Calu3 (cell line): ENCODE measurements at regions of chr2 and their contacts with region 1.

Region 1: DNA sequence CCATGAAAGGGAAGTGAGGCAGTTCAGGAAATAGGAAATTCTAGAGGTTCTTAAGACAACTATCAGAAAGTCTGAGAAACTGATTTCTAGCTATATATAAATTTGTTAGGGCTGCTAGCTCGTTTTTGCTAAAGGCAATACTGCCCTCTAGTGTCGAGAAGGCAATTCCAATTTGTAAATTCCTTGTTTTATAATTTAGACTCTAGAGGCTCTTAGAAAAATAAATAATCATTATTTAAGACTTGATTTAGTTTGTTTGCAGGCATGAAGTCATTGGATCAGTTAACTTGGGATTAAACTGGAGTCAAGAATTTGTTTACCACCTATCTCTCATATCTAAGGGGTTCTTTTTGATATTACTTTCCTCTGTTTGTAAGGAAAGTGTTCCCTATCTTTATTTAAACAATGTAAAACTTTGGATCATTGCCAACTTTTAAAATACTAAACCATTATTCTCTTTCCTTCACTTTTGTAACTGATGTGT is 66.2 kb downstream of the ACVR2A start:
- DNase-seq: peak; percentile 43
- H3K4me3 Mint-ChIP-seq: no peak overlapping the region
- H3K27ac Mint-ChIP-seq: no peak overlapping the region
- H3K4me1 Mint-ChIP-seq: peaks cover 13% of the 10 kb centered on the region
- H3K27me3 Mint-ChIP-seq: no peaks in the 10 kb centered on the region
- CTCF ChIP-seq: no peak

Region 2: GRCh38 chr2:146927080-146927711 is 983.8 kb before region 1 on chr2:
- CTCF ChIA-PET with region 1: interaction called, 19 read pairs
- intact Hi-C with region 1: loop called (anchors 1 kb)
- DNase-seq: peak; percentile 76
- H3K4me3 Mint-ChIP-seq: no peak overlapping the region
- H3K27ac Mint-ChIP-seq: no peak overlapping the region
- H3K4me1 Mint-ChIP-seq: peaks cover 13% of the 10 kb centered on the region
- H3K27me3 Mint-ChIP-seq: no peaks in the 10 kb centered on the region
- CTCF ChIP-seq: peak; percentile 55

Region 3: GRCh38 chr2:147045113-147045512 is 865.9 kb before region 1 on chr2:
- CTCF ChIA-PET with region 1: interaction called, 10 read pairs
- intact Hi-C with region 1: loop called (anchors 1 kb)
- DNase-seq: peak; percentile 77
- H3K4me3 Mint-ChIP-seq: no peak overlapping the region
- H3K27ac Mint-ChIP-seq: peak overlapping the region; percentile 2
- H3K4me1 Mint-ChIP-seq: peaks cover 22% of the 10 kb centered on the region
- H3K27me3 Mint-ChIP-seq: no peaks in the 10 kb centered on the region
- CTCF ChIP-seq: peak; percentile 82

Region 4: DNA sequence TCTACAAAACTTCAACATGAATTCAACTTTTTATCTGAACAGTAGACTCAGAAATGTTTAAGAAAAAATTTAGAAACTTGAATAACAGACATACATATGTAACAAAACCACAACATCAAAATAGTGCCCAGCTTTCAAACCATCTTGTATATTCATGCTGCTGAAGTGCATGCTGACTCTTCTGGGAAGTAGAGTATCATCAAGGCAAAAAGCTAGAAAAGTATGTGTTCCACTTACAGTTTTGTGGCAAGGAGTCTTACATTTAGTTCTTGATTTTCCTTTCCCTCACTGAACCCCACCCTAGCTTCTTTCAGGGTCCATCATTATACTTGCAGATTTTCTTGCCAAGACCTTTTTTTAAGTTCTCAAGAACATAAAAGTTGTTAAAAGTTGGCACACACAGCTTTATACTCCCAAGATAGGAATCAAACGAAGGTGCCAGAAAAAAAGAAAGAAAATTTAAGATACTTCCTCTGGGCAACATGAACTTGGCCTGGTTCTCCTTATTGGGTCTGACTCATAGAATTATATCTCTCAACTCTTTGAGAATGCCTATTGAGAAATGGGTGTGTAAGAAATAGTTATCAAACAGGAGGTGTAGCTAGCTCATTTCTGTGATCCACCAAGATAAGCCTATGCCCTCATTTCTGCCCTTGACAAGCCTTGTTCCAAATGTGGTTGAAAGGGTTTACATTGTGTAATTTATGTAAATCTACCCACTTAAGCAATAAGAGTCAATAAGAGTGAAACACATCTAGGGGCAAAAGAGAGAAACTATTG is 733.8 kb before region 1 on chr2:
- CTCF ChIA-PET with region 1: no interaction called
- intact Hi-C with region 1: loop called (anchors 5 kb)
- DNase-seq: no peak
- H3K4me3 Mint-ChIP-seq: no peak overlapping the region
- H3K27ac Mint-ChIP-seq: peak overlapping the region; percentile 43
- H3K4me1 Mint-ChIP-seq: peaks cover 43% of the 10 kb centered on the region
- H3K27me3 Mint-ChIP-seq: no peaks in the 10 kb centered on the region
- CTCF ChIP-seq: no peak

Region 5: DNA sequence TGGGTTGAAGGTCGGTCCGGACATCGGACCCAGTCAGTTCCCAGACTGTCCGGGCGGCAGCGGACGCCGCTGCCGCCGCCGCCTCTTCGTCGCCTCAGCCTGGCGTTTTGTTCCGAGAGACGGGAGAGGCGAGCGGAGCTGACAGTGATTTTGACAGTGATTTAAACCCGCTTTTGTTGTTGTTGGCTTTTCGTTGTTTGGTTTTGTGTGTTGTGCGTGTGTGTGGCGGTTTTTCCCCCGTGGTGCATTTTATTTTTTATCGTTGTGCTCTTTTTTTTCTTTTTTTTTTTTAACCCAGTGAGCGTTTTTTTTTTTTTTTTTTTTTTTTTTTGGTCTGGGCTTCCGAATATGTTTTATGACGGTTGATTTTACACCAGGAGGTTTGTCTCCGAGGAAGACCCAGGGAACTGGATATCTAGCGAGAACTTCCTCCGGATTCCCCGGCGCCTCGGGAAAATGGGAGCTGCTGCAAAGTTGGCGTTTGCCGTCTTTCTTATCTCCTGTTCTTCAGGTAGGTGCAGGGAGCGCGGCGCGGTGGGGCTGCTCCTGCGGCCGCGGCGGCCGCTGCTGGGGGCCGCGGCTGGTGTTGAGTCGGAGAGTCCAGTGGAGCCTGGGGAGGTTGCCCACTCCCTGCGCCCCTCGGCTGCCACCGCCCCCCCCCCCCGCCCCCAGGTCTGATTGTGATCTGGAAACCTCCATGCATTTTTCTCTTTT is 66.2 kb before region 1 on chr2 and contains the start of gene ACVR2A:
- CTCF ChIA-PET with region 1: no interaction called
- intact Hi-C with region 1: loop called (anchors 5 kb)
- DNase-seq: peak; percentile 27
- H3K4me3 Mint-ChIP-seq: peak within 1 kb of the TSS; percentile 83
- H3K27ac Mint-ChIP-seq: peak within 1 kb of the TSS; percentile 60
- H3K4me1 Mint-ChIP-seq: peaks cover 37% of the 10 kb centered on the region
- H3K27me3 Mint-ChIP-seq: no peaks in the 10 kb centered on the region
- CTCF ChIP-seq: no peak
- total RNA-seq, gene ACVR2A: 12.5 and 14.8 TPM in 2 replicates